ENCODE measurements at regions of chr3 and their contacts with region 1.

Region 1: GRCh38 chr3:52428151-52429005 is 16.5 kb downstream of the SEMA3G start:
- DNase-seq: peak; percentile 83
- ATAC-seq: peak; percentile 98
- H3K4me3 ChIP-seq: no peak overlapping the region
- H3K27ac ChIP-seq: no peak overlapping the region
- H3K4me1 ChIP-seq: peaks cover 4% of the 10 kb centered on the region; the same call in 1 of the 2 replicates
- H3K27me3 ChIP-seq: peaks cover 5% of the 10 kb centered on the region; the same call in 1 of the 2 replicates
- CTCF ChIP-seq: peak; percentile 85
- POLR2A ChIP-seq: 0 out of 2 replicates have a peak, but pooled peaks have one; percentile 28
- RAD21 ChIP-seq: peak; percentile 82

Region 2: GRCh38 chr3:52570076-52570475 is 141.7 kb after region 1 on chr3:
- CTCF ChIA-PET with region 1: no interaction called
- POLR2A ChIA-PET with region 1: interaction called, 13 read pairs
- dilution Hi-C with region 1: no loop called
- in situ Hi-C with region 1: no loop called
- intact Hi-C with region 1: no loop called
- DNase-seq: peak; percentile 54
- ATAC-seq: peak; percentile 85
- H3K4me3 ChIP-seq: no peak overlapping the region
- H3K27ac ChIP-seq: no peak overlapping the region
- H3K4me1 ChIP-seq: peaks cover 4% of the 10 kb centered on the region
- H3K27me3 ChIP-seq: no peaks in the 10 kb centered on the region
- CTCF ChIP-seq: no peak
- POLR2A ChIP-seq: no peak
- RAD21 ChIP-seq: no peak